ENCODE measurements at regions of chr2 and their contacts with region 1.

Region 1: GRCh38 chr2:157302492-157303099 is 23.0 kb downstream of the ERMN start:
- DNase-seq: peak; percentile 33
- H3K4me3 Mint-ChIP-seq: no peak overlapping the region
- H3K27ac Mint-ChIP-seq: no peak overlapping the region
- H3K4me1 Mint-ChIP-seq: peaks cover 14% of the 10 kb centered on the region
- H3K27me3 Mint-ChIP-seq: peaks cover 6% of the 10 kb centered on the region

Region 2: GRCh38 chr2:157290525-157290924 is 12.1 kb before region 1 on chr2:
- CTCF ChIA-PET with region 1: interaction called, 25 read pairs
- POLR2A ChIA-PET with region 1: no interaction called
- intact Hi-C with region 1: no loop called
- DNase-seq: no peak
- H3K4me3 Mint-ChIP-seq: no peak overlapping the region
- H3K27ac Mint-ChIP-seq: no peak overlapping the region
- H3K4me1 Mint-ChIP-seq: no peaks in the 10 kb centered on the region
- H3K27me3 Mint-ChIP-seq: peaks cover 3% of the 10 kb centered on the region

Region 3: DNA sequence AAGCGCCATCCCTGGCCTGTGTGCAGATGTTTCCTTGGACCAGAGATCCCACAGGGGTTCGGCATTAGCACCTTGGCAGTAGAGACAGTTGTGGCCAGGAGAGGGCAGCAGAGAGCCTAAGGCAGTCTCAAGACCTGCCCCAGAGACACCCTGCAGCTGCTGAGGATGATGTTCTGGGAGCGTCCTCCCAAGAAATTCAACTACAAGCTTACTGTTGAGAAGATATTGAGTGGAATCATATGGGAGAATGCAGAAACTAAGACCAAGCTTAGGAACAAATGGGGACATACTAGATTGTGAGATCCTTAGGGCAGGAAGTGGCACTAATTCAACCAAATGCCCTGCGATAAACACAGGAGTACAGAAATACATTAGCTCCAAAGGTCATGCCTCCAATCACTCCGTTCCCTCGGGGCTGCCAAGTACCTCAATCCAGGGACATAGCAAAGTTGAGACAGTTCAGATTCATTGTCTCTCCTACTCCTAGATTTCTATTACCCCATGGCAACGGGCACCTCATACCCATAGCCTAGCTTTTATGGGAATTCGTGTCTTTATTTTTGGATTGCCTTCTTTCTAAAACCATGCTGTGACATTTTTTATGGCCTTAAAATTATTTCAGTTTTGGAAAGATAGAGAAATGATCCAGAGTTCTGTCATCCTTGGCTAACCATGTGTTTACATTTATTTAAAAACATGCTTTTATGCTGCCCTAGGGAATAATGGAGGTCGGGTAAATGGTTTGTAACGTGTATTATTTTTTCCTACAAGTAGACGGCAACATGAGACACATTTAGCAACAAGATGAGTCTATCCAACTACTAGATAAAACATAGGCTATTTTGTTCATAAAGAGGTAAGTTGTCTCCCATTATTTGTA is 25.3 kb after region 1 on chr2:
- CTCF ChIA-PET with region 1: interaction called, 316 read pairs
- POLR2A ChIA-PET with region 1: no interaction called
- intact Hi-C with region 1: no loop called
- DNase-seq: peak; percentile 91
- H3K4me3 Mint-ChIP-seq: peak overlapping the region; percentile 28
- H3K27ac Mint-ChIP-seq: no peak overlapping the region
- H3K4me1 Mint-ChIP-seq: peaks cover 46% of the 10 kb centered on the region
- H3K27me3 Mint-ChIP-seq: no peaks in the 10 kb centered on the region

Region 4: DNA sequence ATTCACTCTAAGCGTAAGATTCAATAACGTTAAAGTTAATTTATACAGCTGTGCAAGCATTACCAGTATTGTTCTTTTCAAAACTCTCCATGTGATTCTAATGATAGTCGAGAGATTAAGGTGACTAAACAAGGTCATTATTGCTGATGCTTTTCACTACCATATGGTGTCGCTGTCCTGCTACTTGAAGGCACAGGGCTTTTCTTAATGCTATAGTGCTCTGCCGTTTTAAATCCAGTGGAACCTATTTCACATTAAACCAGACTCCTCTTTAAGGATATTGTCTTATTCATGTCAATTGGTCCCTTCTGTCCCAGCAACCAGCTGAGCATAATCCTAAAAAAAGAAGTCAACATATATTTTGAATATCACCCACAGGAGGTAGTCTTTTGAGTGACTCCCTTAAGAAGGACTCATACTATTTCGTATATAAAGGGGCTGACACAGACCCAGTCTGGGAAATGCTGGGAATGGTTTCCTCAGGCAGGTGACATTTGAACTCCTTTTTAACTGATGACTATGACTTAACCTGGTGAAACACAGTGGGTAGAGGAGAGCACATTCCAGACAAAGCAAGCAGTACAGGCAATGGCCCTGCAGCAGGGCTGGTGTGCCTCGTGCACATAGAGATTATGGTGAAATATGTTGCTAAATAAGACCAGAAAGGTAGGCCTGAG is 195.2 kb after region 1 on chr2:
- CTCF ChIA-PET with region 1: interaction called, 147 read pairs
- POLR2A ChIA-PET with region 1: no interaction called
- intact Hi-C with region 1: loop called (anchors 2 kb)
- DNase-seq: no peak
- H3K4me3 Mint-ChIP-seq: no peak overlapping the region
- H3K27ac Mint-ChIP-seq: no peak overlapping the region
- H3K4me1 Mint-ChIP-seq: peaks cover 9% of the 10 kb centered on the region
- H3K27me3 Mint-ChIP-seq: no peaks in the 10 kb centered on the region

Region 5: DNA sequence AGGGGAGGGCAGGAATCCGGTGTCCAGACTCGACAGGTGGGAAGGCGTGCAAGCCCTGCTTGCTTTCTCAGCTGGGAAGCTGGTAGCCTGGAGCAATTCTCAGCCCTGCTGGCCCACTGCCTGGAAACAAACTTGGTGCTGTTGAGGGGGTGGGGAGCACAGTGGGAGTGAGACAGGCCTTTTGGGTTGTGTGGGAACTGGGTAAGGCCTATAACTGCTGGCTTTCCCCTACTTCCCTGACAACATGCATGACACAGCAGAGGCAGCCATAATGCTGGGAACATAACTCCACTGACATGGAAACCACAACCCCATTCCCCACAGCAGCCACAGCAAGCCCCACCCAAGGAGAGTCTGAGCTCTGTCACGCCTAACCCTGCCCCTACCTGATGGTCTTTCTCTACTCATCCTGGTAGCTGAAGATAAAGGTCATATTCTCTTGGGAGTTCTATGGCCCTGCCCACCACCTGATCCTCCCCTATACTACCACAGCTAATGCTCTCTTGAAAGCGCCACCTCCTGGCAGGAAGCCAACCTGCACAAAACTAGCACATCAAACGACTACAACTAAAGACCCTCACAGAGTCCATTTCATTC is 449.0 kb after region 1 on chr2:
- CTCF ChIA-PET with region 1: interaction called, 19 read pairs
- POLR2A ChIA-PET with region 1: no interaction called
- intact Hi-C with region 1: loop called (anchors 10 kb)
- DNase-seq: peak; percentile 39
- H3K4me3 Mint-ChIP-seq: no peak overlapping the region
- H3K27ac Mint-ChIP-seq: no peak overlapping the region
- H3K4me1 Mint-ChIP-seq: peaks cover 13% of the 10 kb centered on the region
- H3K27me3 Mint-ChIP-seq: no peaks in the 10 kb centered on the region